Right ventricle myocardium superior (tissue), 1 donor: ENCODE measurements at regions of chr16 and their contacts with region 1.

Region 1: DNA sequence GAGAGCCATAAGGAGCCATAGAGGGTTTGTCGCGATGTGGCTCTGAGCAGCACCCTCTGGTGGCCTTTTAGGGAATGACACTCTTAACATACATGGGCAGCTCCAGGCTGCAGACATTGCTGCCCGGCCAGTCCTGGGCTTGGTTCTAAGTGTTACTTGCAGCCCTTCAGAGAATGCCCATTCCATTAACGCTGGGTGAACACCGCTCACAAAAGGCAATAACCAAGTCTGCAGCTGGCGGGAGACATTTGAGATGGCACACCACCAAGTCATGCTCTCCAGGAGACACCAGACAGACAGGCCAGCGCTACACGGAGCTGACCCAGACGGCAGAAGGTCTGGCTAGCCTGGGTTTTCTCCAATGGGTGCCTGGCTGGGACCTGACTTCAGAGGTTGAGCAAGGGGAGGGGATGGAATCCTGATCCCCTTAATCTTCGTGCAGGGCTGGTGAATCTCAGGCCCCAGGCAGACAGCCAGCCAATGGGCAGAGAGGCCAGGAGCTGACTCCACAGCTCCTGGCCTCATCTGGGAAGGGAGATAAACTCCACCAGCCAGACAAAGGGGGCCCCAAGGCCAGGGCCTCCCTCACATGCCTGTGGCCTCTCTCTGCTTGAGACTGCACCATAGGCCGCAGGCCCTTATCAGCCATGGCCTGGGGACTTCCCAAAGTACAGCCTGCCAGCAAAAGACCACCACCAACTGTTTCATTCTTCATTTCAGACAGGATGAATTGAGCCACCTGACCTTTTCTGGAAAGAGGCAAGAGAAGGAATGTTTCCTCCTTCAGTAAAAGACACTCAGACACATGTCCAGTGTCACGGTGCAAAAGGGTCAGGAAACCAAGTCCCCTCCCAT is 58.8 kb downstream of the ZDHHC7 start:
- DNase-seq: peak; percentile 71
- ATAC-seq: peak; percentile 96

Region 2: DNA sequence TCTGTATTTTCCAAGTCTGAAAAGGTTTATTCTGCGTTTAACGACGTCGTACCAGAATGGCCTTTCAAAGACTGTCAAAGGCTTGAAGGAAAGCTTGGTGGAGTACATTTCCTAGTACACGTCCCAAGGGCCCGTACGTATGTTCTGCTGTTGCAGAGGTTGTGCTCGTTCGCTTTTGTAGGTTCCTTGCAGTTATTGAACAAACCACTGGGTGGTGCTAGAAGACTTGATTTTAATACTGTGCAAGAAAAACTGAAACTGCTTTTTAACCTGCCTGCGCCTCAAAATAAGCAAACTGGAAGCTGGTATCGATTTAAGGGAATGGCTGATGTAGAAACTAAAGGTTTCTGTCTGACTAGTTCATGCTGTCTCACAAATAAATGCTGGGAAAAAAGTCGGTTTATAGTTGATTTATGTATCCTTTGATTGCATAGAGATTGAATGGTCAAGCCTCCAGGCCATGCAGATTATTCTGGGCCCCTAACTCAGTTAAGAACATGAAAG is 198.2 kb before region 1 on chr16:
- intact Hi-C with region 1: loop called (anchors 5 kb)
- DNase-seq: no peak
- ATAC-seq: peak; percentile 85

Region 3: DNA sequence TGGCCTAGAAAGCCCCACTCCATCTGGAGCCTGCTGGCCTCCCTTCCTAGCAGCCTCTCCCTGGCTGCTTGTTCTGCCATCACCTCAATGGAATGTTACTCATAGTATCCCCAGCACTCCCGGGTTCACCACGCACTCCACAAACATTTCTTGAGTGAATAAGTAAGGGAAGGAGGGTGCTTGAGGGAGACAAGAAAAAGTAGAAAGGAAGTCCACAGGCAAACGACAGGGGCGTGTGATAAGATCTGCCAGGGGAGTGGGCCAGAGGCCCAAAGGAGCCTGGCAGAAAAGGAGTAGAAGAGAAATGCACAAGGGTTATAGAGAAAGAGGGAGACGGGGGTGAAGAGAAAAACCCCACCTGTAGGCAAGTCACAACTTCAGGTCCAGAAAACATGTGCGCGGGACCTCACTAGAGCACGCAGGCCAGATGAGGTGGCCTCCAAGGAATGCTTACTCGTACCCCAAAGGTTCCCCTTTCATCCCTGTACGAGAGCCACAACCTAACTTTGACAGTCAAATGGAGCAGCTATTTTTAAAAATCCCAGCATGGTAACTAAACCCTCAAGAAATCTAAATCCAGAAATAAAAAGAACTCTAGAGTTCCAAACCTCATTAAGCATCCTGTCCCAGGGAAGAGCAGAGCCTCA is 52.1 kb after region 1 on chr16:
- intact Hi-C with region 1: no loop called
- DNase-seq: no peak
- ATAC-seq: peak; percentile 34

Region 4: DNA sequence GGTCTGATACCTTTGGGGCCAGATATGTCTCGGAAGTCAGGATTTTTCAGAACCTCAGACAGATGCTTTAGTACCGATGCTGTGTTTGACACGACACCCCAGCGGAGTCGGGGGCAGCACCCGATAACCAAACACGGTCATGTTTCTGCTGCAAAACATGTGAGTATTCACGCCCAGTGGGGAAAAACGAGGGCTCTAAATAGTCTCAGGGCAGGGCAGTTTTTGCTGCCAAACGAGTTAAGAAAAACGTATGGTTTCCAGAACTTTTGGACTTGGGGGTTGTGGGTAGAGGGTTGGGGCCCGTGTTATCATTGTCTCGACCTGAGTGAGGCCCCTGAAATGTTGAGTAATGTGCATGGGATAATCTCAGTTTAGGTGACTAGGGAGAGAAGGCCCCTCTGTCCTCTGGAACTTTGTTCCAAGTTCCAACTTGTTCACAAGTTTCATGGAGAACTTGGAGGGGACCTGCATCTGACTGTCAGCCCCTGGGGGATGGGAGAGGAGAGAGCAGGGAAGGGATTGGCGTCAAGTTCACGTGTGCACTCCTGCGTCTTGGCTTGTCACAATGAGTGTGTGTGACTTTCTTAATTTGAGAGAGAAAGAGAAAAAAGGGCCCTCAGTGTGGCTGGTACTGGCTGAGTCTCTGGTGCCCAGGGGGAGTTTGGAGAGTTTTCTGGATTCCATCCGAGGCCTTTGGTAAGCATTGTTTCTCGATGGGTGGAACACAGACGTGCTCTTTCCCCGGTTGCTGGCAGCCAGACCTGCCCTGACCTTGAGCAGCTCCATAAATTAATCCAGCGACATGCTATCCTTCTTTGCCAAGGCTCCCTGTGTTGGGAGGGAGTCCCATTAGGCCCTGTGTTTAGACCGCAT is 243.6 kb after region 1 on chr16:
- intact Hi-C with region 1: no loop called
- DNase-seq: peak; percentile 55
- ATAC-seq: peak; percentile 74

Region 5: GRCh38 chr16:85296859-85297660 is 344.5 kb after region 1 on chr16:
- intact Hi-C with region 1: no loop called
- DNase-seq: no peak
- ATAC-seq: peak; percentile 67